ENCODE measurements at regions of chr9 and their contacts with region 1.

Region 1: DNA sequence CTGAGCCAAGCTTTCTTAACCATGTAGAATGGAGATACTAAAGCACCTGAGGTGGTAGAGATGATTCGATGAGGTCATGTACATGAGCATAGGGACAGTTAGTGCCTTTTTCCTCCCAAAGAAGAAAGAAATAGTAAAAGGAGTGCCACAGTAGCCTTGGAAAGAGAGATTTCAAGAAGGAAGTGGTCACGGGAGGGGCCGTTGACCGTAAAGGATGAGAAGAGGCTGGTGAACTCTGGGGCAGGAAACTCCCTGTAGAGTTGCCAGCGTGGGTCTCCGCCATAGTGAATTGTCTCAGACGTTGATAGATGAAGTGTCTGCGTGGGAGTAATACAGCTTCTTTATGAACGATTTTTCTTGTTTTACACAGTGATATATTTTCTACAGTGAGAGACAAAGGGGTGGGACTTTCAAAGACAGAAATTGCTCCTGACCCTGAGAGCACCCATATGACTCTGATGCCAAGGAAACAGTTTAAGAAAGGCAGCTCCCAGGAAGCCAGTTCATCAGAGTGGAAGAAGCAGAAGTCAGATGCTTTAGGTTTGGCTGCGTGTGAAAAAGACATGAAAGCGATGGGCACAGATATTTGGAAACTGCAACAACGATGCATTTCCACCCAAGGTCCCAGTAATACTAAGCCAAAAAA is 41.3 kb downstream of the UGCG start:
- DNase-seq: peak; percentile 87
- H3K4me3 Mint-ChIP-seq: peak overlapping the region; percentile 32
- H3K27ac Mint-ChIP-seq: peak overlapping the region; percentile 86
- H3K4me1 Mint-ChIP-seq: peaks cover 23% of the 10 kb centered on the region
- H3K27me3 Mint-ChIP-seq: no peaks in the 10 kb centered on the region

Region 2: DNA sequence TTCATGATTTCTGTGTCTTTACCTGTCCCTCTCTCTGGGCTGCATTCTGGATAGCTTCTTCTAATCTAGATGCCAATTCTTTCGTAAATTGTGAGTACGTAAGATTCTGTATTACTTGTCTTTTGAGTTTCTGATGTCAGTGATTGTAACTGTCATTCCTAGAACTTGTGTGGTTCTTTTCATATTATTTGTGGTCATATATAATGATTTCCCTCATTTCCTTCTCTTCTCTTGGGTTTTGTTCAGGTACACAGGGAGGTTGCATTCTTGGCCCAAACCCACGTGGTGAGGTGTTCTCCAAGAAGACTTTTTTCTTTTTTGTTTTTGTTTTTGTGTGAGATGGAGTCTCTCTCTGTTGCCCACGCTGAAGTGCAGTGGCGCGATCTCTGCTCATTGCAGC is 27.5 kb before region 1 on chr9:
- CTCF ChIA-PET with region 1: no interaction called
- intact Hi-C with region 1: loop called (anchors 1 kb)
- DNase-seq: peak; percentile 42
- H3K4me3 Mint-ChIP-seq: no peak overlapping the region
- H3K27ac Mint-ChIP-seq: no peak overlapping the region
- H3K4me1 Mint-ChIP-seq: peaks cover 82% of the 10 kb centered on the region
- H3K27me3 Mint-ChIP-seq: no peaks in the 10 kb centered on the region

Region 3: GRCh38 chr9:111926421-111926875 is 11.5 kb before region 1 on chr9:
- CTCF ChIA-PET with region 1: no interaction called
- intact Hi-C with region 1: loop called (anchors 1 kb)
- DNase-seq: peak; percentile 70
- H3K4me3 Mint-ChIP-seq: no peak overlapping the region
- H3K27ac Mint-ChIP-seq: peak overlapping the region; percentile 46
- H3K4me1 Mint-ChIP-seq: peaks cover 25% of the 10 kb centered on the region
- H3K27me3 Mint-ChIP-seq: no peaks in the 10 kb centered on the region

Region 4: DNA sequence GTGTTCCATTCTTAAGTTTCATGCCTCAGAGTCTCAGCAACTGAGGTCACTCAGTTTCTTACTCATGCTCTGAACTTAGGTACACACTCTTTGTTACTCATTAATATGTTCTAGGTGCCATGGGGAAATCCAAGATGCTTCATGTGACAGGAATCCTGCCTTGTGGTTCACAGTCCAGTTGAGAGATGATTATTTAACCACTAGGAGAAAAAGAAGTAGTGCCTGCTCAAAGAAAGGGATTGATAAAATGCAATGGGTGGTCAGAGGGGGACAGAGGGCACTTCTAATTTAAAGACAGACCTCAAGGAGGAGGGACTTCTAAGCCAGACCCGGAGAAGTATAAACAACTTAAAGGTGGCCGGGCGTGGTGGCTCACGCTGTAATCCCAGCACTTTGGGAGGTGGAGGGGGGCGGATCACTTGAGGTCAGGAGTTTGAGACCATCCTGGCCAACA is 27.7 kb after region 1 on chr9:
- CTCF ChIA-PET with region 1: no interaction called
- intact Hi-C with region 1: loop called (anchors 1 kb)
- DNase-seq: peak; percentile 55
- H3K4me3 Mint-ChIP-seq: no peak overlapping the region
- H3K27ac Mint-ChIP-seq: no peak overlapping the region
- H3K4me1 Mint-ChIP-seq: peaks cover 5% of the 10 kb centered on the region
- H3K27me3 Mint-ChIP-seq: no peaks in the 10 kb centered on the region

Region 5: DNA sequence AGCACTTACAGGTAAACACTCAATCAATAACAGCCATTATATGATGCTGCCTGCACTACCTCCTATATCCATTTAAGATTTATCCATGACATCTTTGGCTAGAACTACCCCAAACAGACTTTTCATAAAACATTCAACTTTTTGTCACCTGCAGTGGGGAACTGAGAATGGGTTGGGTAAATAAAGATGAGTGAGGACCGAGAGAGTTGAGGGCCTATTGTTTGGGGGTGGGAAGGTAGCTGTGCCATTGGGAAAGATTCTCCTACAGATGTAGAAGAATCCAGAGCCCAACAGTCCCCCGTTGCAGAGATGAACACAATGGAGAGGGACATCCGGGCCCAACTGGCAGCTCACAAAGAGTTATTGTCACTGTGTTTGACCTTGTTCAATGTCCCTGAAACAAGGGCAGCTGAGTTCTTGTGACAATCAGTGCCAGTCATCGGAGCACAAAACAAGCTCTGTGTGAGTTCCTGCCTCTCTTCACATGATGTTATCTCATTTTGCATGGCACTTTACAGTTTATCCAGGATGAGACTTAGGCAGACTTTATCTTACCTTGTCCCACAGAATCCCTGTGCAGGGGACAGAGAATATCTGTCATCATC is 1201.4 kb after region 1 on chr9:
- CTCF ChIA-PET with region 1: no interaction called
- intact Hi-C with region 1: no loop called
- DNase-seq: no peak
- H3K4me3 Mint-ChIP-seq: no peak overlapping the region
- H3K27ac Mint-ChIP-seq: no peak overlapping the region
- H3K4me1 Mint-ChIP-seq: no peaks in the 10 kb centered on the region
- H3K27me3 Mint-ChIP-seq: no peaks in the 10 kb centered on the region